Activated naive CD4-positive, alpha-beta T cell treated with anti-CD3 and anti-CD28 coated beads, Interleukin-2, amount 10 ng/mL, durations not matched to agents 7 days and 5 days (primary cell): ENCODE measurements at regions of chr12 and their contacts with region 1.

Region 1: DNA sequence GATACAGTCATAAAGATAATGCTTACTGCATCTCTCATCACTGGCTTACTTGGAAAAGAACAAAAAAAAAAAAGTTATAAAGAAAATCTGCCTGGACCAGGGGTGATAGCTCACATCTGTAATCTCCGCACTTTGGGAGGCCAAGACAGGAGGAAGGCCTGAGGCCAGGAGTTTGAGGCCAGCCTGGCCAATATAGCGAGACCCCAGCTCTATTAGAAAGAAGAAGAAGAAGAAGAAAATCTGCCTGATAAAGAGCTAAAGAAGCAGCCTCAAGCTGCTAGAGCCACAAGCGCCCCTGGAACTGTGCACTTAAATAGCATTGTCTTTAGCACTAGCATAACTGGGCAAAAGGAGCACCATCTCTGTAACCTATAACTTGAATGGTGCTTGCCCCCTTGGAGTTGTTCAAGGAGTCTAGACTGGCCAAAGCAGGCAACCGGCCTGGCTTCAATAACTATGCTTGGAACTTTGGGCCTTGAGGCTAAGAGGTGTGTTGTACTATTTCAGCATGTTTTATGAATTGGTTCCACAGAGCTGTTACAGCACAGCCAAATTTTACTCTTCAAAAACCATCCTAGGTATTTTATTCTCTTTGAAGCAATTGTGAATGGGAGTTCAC is 53.2 kb downstream of the SINHCAF start:
- DNase-seq: no peak
- H3K4me3 Mint-ChIP-seq: no peak overlapping the region
- H3K27ac Mint-ChIP-seq: peak overlapping the region; percentile 60
- H3K4me1 Mint-ChIP-seq: no peaks in the 10 kb centered on the region
- H3K27me3 Mint-ChIP-seq: no peaks in the 10 kb centered on the region

Region 2: GRCh38 chr12:30847259-30847658 is 425.5 kb before region 1 on chr12:
- CTCF ChIA-PET with region 1: interaction called, 27 read pairs
- DNase-seq: peak; percentile 43
- H3K4me3 Mint-ChIP-seq: no peak overlapping the region
- H3K27ac Mint-ChIP-seq: no peak overlapping the region
- H3K4me1 Mint-ChIP-seq: peaks cover 10% of the 10 kb centered on the region
- H3K27me3 Mint-ChIP-seq: no peaks in the 10 kb centered on the region

Region 3: GRCh38 chr12:31250179-31250578 is 22.5 kb before region 1 on chr12:
- CTCF ChIA-PET with region 1: interaction called, 11 read pairs
- DNase-seq: no peak
- H3K4me3 Mint-ChIP-seq: no peak overlapping the region
- H3K27ac Mint-ChIP-seq: no peak overlapping the region
- H3K4me1 Mint-ChIP-seq: no peaks in the 10 kb centered on the region
- H3K27me3 Mint-ChIP-seq: peaks cover 9% of the 10 kb centered on the region

Region 4: DNA sequence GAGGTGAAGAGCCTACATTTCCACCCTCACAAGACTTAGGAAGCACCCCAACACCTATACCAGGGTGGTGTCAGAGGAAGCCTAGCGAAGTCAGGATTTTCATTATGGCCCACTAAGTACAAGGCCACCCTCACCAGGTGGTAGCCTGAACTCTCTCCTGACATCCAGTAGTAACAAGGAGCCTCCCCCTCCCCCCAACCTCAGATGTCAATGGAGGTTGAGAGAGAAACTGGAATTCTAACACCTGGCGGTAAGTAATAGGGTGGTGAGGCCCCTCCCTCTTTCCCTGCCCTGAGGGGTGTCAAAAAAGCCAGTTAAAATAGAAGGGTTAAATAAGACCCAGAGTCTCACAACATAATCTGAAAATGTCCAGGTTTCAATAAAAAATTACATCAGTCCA is 15.7 kb after region 1 on chr12:
- CTCF ChIA-PET with region 1: interaction called, 11 read pairs
- DNase-seq: no peak
- H3K4me3 Mint-ChIP-seq: no peak overlapping the region
- H3K27ac Mint-ChIP-seq: peak overlapping the region; percentile 33
- H3K4me1 Mint-ChIP-seq: no peaks in the 10 kb centered on the region
- H3K27me3 Mint-ChIP-seq: no peaks in the 10 kb centered on the region

Region 5: DNA sequence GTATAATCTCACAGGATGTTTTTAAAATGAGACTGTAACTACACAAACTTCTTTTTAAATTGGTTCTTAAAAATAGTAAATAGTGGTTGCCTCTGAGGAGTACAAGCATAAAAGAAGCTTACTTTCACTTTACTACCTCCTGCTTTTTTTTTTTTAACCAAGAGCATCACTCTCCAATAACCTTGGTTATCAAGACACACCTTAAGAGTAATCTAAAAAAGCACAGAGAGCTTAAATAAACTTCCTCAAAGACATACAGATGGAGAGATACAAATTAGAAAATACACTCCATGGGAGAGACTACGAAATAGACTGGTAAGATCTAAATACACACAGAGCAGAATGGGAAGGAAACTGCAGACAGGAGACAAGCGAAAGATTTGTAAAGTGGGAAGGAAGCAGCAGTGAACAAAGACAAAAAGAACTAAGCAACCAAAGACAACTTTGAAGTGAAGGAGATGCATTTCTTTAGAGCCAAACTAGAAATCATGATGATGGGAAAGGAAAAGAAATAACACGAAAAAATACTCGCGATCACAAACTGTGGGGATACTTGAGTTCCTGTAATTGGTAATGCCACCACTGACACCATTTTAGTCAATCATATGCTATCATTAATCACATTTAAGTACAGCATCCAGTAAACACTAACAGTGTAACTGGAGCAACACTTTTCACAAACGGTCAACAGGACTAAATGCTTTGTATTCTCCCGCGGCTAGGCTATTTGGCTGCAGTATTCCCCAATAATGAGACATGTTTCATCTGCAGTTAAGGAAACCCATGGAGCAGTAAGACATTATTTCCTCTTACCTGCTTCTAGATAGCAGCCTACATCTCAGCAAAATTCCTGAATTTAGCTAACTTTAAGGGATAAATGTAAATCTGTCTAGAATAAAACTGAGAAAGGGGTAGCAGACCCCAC is 45.0 kb after region 1 on chr12:
- CTCF ChIA-PET with region 1: interaction called, 11 read pairs
- DNase-seq: no peak
- H3K4me3 Mint-ChIP-seq: peak overlapping the region; percentile 79
- H3K27ac Mint-ChIP-seq: peak overlapping the region; percentile 92
- H3K4me1 Mint-ChIP-seq: peaks cover 77% of the 10 kb centered on the region
- H3K27me3 Mint-ChIP-seq: no peaks in the 10 kb centered on the region

Region 6: DNA sequence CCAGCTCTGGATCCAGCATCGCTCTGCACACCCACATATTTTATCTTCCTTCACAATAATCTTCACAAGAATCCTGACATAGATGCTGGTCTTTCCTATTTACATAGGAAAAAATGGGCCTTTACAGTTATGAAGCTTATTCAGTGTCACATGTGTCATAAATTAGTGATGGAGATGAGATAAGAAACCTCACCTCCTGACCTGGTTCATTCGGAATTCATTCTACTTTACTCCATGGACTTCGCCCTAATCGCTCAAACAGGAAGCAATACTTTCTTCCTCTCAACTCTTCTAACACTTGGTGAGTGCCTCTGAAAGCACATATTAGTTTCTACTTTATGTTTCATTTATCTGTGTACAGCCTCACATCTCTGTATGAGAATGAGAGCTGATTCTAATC is 65.2 kb after region 1 on chr12:
- CTCF ChIA-PET with region 1: no interaction called
- DNase-seq: no peak
- H3K4me3 Mint-ChIP-seq: no peak overlapping the region
- H3K27ac Mint-ChIP-seq: no peak overlapping the region
- H3K4me1 Mint-ChIP-seq: no peaks in the 10 kb centered on the region
- H3K27me3 Mint-ChIP-seq: peaks cover 3% of the 10 kb centered on the region